CD8-positive, alpha-beta T cell (primary cell): ENCODE measurements at regions of chr3 and their contacts with region 1.

Region 1: DNA sequence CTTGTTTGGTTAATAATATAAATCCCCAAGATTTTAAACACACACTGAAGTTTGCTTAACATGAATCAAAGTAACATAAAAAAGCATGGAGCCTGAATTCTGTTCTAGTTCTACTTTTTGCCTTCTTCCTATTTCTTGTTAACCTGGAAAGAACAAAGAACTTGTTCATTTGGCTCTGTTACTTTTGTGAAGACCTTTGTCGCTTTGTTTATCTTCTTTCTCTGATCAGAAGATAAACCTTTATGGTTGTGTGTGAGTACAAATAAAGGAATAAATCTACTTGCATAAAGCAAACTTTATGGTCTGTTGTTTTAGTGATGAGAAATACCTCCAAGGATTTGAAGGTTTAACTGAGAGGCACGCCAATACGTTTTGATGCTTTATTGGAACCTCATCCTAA is 210.1 kb upstream of the SATB1 start:
- DNase-seq: no peak
- ATAC-seq: no peak
- H3K4me3 ChIP-seq: no peak overlapping the region
- H3K4me3 Mint-ChIP-seq: no peak overlapping the region
- H3K27ac ChIP-seq: no peak overlapping the region
- H3K27ac Mint-ChIP-seq: no peak overlapping the region
- H3K4me1 ChIP-seq: no peaks in the 10 kb centered on the region
- H3K4me1 Mint-ChIP-seq: no peaks in the 10 kb centered on the region
- H3K27me3 ChIP-seq: no peaks in the 10 kb centered on the region
- H3K27me3 Mint-ChIP-seq: no peaks in the 10 kb centered on the region
- CTCF ChIP-seq: no peak

Region 2: DNA sequence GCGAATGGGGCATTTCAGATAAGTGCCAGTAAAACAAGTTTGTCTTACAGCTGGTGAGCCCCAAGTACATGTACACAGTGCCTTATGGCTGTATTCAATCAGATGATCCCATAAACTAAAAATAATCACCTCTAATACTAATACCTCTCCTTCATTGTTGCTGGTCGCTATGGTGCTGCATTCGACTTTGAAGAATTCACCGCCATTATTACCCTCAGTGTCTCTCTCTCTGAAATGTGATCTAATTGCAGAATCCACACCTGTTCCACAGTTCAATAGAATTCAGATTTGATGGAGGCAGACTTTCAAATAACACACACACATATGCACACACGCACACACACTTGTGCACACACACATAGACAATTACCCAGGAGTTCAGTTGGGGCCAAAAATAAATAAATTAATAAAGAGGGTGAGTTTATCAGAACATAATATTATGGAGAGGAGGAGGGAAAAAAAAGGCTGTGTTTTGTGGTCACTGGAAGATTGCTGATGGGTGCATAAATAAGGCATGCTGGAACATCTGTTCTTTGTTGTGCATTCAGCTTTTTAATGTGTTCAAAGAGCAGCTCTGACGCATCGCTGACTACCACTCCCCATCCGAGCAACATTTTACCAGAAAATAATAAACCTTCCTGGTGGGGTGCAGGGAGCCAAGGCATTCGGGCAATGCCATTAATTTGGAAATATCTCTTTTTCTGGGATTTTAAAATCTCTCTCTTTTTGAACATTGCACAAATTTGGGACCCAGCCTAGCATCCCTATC is 445.7 kb before region 1 on chr3:
- CTCF ChIA-PET with region 1: no interaction called
- POLR2A ChIA-PET with region 1: no interaction called
- intact Hi-C with region 1: no loop called
- DNase-seq: no peak
- ATAC-seq: no peak
- H3K4me3 ChIP-seq: no peak overlapping the region
- H3K4me3 Mint-ChIP-seq: no peak overlapping the region
- H3K27ac ChIP-seq: no peak overlapping the region
- H3K27ac Mint-ChIP-seq: no peak overlapping the region
- H3K4me1 ChIP-seq: no peaks in the 10 kb centered on the region
- H3K4me1 Mint-ChIP-seq: no peaks in the 10 kb centered on the region
- H3K27me3 ChIP-seq: no peaks in the 10 kb centered on the region
- H3K27me3 Mint-ChIP-seq: no peaks in the 10 kb centered on the region
- CTCF ChIP-seq: no peak

Region 3: GRCh38 chr3:18591120-18591519 is 44.1 kb before region 1 on chr3:
- CTCF ChIA-PET with region 1: no interaction called
- POLR2A ChIA-PET with region 1: no interaction called
- intact Hi-C with region 1: loop called in 1 of 2 experiments (anchors 5 kb)
- DNase-seq: no peak
- ATAC-seq: no peak
- H3K4me3 ChIP-seq: no peak overlapping the region
- H3K4me3 Mint-ChIP-seq: no peak overlapping the region
- H3K27ac ChIP-seq: no peak overlapping the region
- H3K27ac Mint-ChIP-seq: no peak overlapping the region
- H3K4me1 ChIP-seq: no peaks in the 10 kb centered on the region
- H3K4me1 Mint-ChIP-seq: no peaks in the 10 kb centered on the region
- H3K27me3 ChIP-seq: no peaks in the 10 kb centered on the region
- H3K27me3 Mint-ChIP-seq: no peaks in the 10 kb centered on the region
- CTCF ChIP-seq: no peak